HepG2 (cell line): ENCODE measurements at regions of chr6 and their contacts with region 1.

Region 1: GRCh38 chr6:25942561-25943147 is 12.2 kb upstream of the SLC17A2 start:
- DNase-seq: peak; percentile 76
- ATAC-seq: peak; percentile 93
- H3K4me3 ChIP-seq: no peak overlapping the region
- H3K27ac ChIP-seq: no peak overlapping the region
- H3K4me1 ChIP-seq: peaks cover 34% of the 10 kb centered on the region
- H3K27me3 ChIP-seq: no peaks in the 10 kb centered on the region
- CTCF ChIP-seq: peak; percentile 92
- EP300 ChIP-seq: no peak; a peak in 1 of 4 replicates
- POLR2A ChIP-seq: no peak
- RAD21 ChIP-seq: peak; percentile 89

Region 2: GRCh38 chr6:25223490-25223991 is 719.1 kb before region 1 on chr6:
- CTCF ChIA-PET with region 1: no interaction called
- POLR2A ChIA-PET with region 1: no interaction called
- in situ Hi-C with region 1: no loop called
- intact Hi-C with region 1: loop called (anchors 10 kb)
- DNase-seq: peak; percentile 54
- ATAC-seq: peak; percentile 73
- H3K4me3 ChIP-seq: no peak overlapping the region
- H3K27ac ChIP-seq: no peak overlapping the region
- H3K4me1 ChIP-seq: no peaks in the 10 kb centered on the region
- H3K27me3 ChIP-seq: 0 out of 5 replicates have a peak, but pooled peaks cover 0 to 4% of the 10 kb centered on the region in 2 experiments
- CTCF ChIP-seq: peak; percentile 84
- EP300 ChIP-seq: no peak
- POLR2A ChIP-seq: no peak
- RAD21 ChIP-seq: peak; percentile 57; the same call in 1 of the 2 replicates

Region 3: GRCh38 chr6:25556516-25556915 is 386.1 kb before region 1 on chr6:
- CTCF ChIA-PET with region 1: no interaction called
- POLR2A ChIA-PET with region 1: no interaction called
- in situ Hi-C with region 1: no loop called
- intact Hi-C with region 1: loop called (anchors 10 kb)
- DNase-seq: peak; percentile 65
- ATAC-seq: peak; percentile 81
- H3K4me3 ChIP-seq: no peak overlapping the region
- H3K27ac ChIP-seq: no peak overlapping the region
- H3K4me1 ChIP-seq: no peaks in the 10 kb centered on the region
- H3K27me3 ChIP-seq: no peaks in the 10 kb centered on the region
- CTCF ChIP-seq: peak; percentile 88
- EP300 ChIP-seq: no peak
- POLR2A ChIP-seq: no peak
- RAD21 ChIP-seq: no peak

Region 4: GRCh38 chr6:25788305-25788922 is 154.2 kb before region 1 on chr6:
- CTCF ChIA-PET with region 1: interaction called, 40 read pairs
- POLR2A ChIA-PET with region 1: no interaction called
- in situ Hi-C with region 1: loop called (anchors 5 kb)
- intact Hi-C with region 1: loop called (anchors 1 kb)
- DNase-seq: peak; percentile 72
- ATAC-seq: peak; percentile 99
- H3K4me3 ChIP-seq: no peak overlapping the region
- H3K27ac ChIP-seq: no peak overlapping the region
- H3K4me1 ChIP-seq: no peaks in the 10 kb centered on the region; the same call in 1 of the 2 replicates
- H3K27me3 ChIP-seq: no peaks in the 10 kb centered on the region
- CTCF ChIP-seq: peak; percentile 85
- EP300 ChIP-seq: no peak
- POLR2A ChIP-seq: no peak
- RAD21 ChIP-seq: peak; percentile 85

Region 5: DNA sequence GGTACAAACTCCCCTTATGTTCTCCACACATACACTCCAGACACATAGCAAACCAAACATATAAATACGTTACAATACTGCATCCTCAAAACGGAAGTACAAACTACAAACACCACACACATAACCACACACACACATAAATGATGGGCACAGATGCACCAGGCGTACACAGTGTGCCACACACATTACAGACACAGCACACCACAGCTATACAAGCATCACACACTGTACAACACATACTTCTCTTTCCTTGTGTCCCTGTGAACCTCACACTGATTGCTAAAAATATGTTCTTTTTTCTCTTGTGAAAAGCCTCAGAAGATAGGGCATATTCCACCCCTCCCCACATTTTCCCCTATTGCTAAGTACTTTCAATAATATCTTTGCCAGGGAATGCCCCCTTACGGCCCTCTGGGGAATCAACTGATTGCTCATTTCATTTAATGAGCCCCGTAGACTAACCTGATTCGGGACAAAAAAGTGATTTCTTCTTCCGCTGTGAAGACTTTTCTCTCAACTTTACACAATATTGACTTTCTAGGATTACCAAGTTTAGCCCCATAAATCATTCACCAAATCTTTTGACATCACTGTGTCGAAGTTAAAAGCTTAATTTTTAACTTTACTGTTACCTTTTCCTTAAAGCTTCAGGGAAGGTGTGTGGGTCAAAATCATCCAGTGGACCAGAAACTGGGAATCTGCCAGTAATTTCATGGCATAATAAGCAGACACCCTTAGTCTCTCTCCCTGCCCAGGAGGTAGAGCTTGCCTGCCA is 110.9 kb before region 1 on chr6 and contains the start of gene SLC17A1:
- CTCF ChIA-PET with region 1: no interaction called
- POLR2A ChIA-PET with region 1: no interaction called
- in situ Hi-C with region 1: no loop called
- intact Hi-C with region 1: loop called (anchors 5 kb)
- DNase-seq: peak; percentile 54
- ATAC-seq: peak; percentile 51
- H3K4me3 ChIP-seq: peak within 1 kb of the TSS; percentile 33 to 47 (median 37); a peak in 4 of 6 replicates
- H3K27ac ChIP-seq: peak within 1 kb of the TSS; percentile 29
- H3K4me1 ChIP-seq: peaks cover 73% of the 10 kb centered on the region
- H3K27me3 ChIP-seq: no peaks in the 10 kb centered on the region; a peak in 1 of 5 replicates
- CTCF ChIP-seq: peak; percentile 51; the same call in 1 of the 2 replicates
- EP300 ChIP-seq: peak in 1 of 2 experiments; percentile 74; a peak in 2 of 4 replicates
- POLR2A ChIP-seq: no peak
- RAD21 ChIP-seq: no peak
- total RNA-seq, gene SLC17A1: 0.09 TPM in 1 of 2 replicates, not detected in the other

Region 6: DNA sequence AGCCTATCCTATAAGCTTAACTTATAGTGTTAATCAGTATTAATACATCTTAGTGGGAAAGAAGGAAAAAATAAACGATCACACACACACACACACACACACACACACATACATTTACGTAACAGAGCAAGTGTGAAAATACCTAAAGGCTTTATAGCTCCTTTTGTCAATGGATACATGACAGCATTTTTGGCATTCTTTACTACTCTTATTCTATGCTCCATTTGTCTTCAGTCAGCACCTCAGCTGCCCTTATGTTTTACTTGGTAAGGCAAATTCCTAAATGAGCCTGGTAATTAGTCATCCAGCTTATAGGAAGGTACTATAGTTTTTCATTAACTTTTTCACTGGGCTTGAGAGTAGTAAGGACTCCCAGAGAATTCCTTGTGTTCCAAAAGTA is 43.5 kb before region 1 on chr6:
- CTCF ChIA-PET with region 1: no interaction called
- POLR2A ChIA-PET with region 1: interaction called, 6 read pairs
- in situ Hi-C with region 1: no loop called
- intact Hi-C with region 1: loop called (anchors 2 kb)
- DNase-seq: peak; percentile 43
- ATAC-seq: peak; percentile 45
- H3K4me3 ChIP-seq: no peak overlapping the region; a peak in 1 of 6 replicates
- H3K27ac ChIP-seq: peak overlapping the region; percentile 61
- H3K4me1 ChIP-seq: peaks cover 54% of the 10 kb centered on the region
- H3K27me3 ChIP-seq: no peaks in the 10 kb centered on the region
- CTCF ChIP-seq: no peak
- EP300 ChIP-seq: no peak
- POLR2A ChIP-seq: no peak
- RAD21 ChIP-seq: no peak